ENCODE measurements at regions of chr5 and their contacts with region 1.

Region 1: GRCh38 chr5:157328277-157328912 is 62.5 kb downstream of the CYFIP2 start:
- DNase-seq: peak; percentile 88
- H3K4me3 ChIP-seq: peak overlapping the region; percentile 22 to 40; a peak in 2 of 4 replicates
- H3K27ac ChIP-seq: no peak overlapping the region
- H3K4me1 ChIP-seq: no peaks in the 10 kb centered on the region; a peak in 1 of 4 replicates
- H3K27me3 ChIP-seq: no peaks in the 10 kb centered on the region
- CTCF ChIP-seq: peak; percentile 91
- EP300 ChIP-seq: no peak
- RAD21 ChIP-seq: peak; percentile 96

Region 2: GRCh38 chr5:157253547-157253946 is 74.8 kb before region 1 on chr5:
- CTCF ChIA-PET with region 1: interaction called, 15 read pairs
- POLR2A ChIA-PET with region 1: no interaction called
- DNase-seq: peak; percentile 86
- H3K4me3 ChIP-seq: no peak overlapping the region; a peak in 1 of 4 replicates
- H3K27ac ChIP-seq: no peak overlapping the region
- H3K4me1 ChIP-seq: peaks cover 0 to 9% of the 10 kb centered on the region in 2 experiments; a peak in 2 of 4 replicates
- H3K27me3 ChIP-seq: no peaks in the 10 kb centered on the region
- CTCF ChIP-seq: peak; percentile 92
- EP300 ChIP-seq: no peak
- RAD21 ChIP-seq: peak; percentile 95

Region 3: DNA sequence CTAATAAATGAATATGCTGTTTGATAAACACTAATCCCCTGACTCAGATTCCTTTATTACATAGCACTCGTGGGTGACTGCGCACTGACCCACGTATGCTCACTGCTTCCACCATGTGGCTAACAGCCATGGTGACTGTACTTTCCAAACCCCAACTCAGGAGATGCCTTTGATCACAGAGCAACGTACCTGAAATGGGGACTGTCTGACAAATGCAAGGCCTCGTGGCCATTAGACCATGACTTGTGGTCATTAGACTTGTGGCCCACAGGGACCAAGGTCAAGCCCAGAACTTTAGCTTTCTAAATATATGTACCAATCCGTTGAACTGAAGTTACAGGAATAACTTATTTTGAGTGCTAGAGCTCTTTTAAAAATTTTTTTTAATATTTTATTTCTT is 15.9 kb before region 1 on chr5:
- CTCF ChIA-PET with region 1: interaction called, 27 read pairs
- POLR2A ChIA-PET with region 1: no interaction called
- DNase-seq: peak; percentile 82
- H3K4me3 ChIP-seq: no peak overlapping the region; a peak in 1 of 4 replicates
- H3K27ac ChIP-seq: no peak overlapping the region
- H3K4me1 ChIP-seq: peaks cover 0 to 3% of the 10 kb centered on the region in 2 experiments; a peak in 1 of 4 replicates
- H3K27me3 ChIP-seq: no peaks in the 10 kb centered on the region
- CTCF ChIP-seq: peak; percentile 80
- EP300 ChIP-seq: no peak
- RAD21 ChIP-seq: peak; percentile 76

Region 4: GRCh38 chr5:157354800-157355199 is 26.4 kb after region 1 on chr5:
- CTCF ChIA-PET with region 1: interaction called, 15 read pairs
- POLR2A ChIA-PET with region 1: no interaction called
- DNase-seq: peak; percentile 27
- H3K4me3 ChIP-seq: no peak overlapping the region; a peak in 1 of 4 replicates
- H3K27ac ChIP-seq: no peak overlapping the region
- H3K4me1 ChIP-seq: peaks cover 0 to 9% of the 10 kb centered on the region in 2 experiments; a peak in 2 of 4 replicates
- H3K27me3 ChIP-seq: no peaks in the 10 kb centered on the region
- CTCF ChIP-seq: peak; percentile 45
- EP300 ChIP-seq: no peak
- RAD21 ChIP-seq: no peak

Region 5: DNA sequence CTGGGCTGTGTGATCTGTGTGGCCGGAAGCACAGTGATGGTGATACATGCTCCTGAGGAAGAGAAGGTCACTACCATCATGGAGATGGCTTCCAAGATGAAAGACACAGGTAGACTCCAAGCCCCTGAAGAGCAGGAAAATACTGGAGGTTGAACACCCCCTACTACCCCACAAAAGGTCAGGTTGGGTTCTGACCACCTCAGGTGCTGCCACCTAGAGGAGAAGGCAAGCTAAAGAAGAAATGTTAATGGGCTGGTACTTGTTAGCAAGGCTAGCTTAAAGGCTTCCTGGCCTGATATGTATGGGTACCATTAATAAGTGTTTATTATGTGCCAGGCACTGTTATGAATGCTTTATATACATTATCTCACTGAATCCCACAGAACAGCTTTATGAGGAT is 143.3 kb after region 1 on chr5:
- CTCF ChIA-PET with region 1: interaction called, 102 read pairs
- POLR2A ChIA-PET with region 1: no interaction called
- DNase-seq: peak; percentile 51
- H3K4me3 ChIP-seq: no peak overlapping the region
- H3K27ac ChIP-seq: 0 out of 4 replicates have a peak overlapping the region, but pooled peaks of 1 of the 2 experiments have one; percentile 40
- H3K4me1 ChIP-seq: peaks cover 1 to 15% of the 10 kb centered on the region in 2 experiments; a peak in 3 of 4 replicates
- H3K27me3 ChIP-seq: no peaks in the 10 kb centered on the region
- CTCF ChIP-seq: peak; percentile 70
- EP300 ChIP-seq: no peak
- RAD21 ChIP-seq: peak; percentile 59

Region 6: GRCh38 chr5:157486221-157486681 is 157.9 kb after region 1 on chr5:
- CTCF ChIA-PET with region 1: interaction called, 102 read pairs
- POLR2A ChIA-PET with region 1: no interaction called
- DNase-seq: no peak
- H3K4me3 ChIP-seq: no peak overlapping the region
- H3K27ac ChIP-seq: no peak overlapping the region
- H3K4me1 ChIP-seq: no peaks in the 10 kb centered on the region
- H3K27me3 ChIP-seq: no peaks in the 10 kb centered on the region
- CTCF ChIP-seq: no peak
- EP300 ChIP-seq: no peak
- RAD21 ChIP-seq: no peak

Region 7: GRCh38 chr5:157640406-157641066 is 312.1 kb after region 1 on chr5:
- CTCF ChIA-PET with region 1: no interaction called
- POLR2A ChIA-PET with region 1: no interaction called
- DNase-seq: no peak
- H3K4me3 ChIP-seq: no peak overlapping the region
- H3K27ac ChIP-seq: no peak overlapping the region
- H3K4me1 ChIP-seq: no peaks in the 10 kb centered on the region
- H3K27me3 ChIP-seq: no peaks in the 10 kb centered on the region
- CTCF ChIP-seq: no peak
- EP300 ChIP-seq: no peak
- RAD21 ChIP-seq: no peak

Region 8: GRCh38 chr5:157743163-157744050 is 415.0 kb after region 1 on chr5 and contains the start of gene LSM11:
- CTCF ChIA-PET with region 1: interaction called, 10 read pairs
- POLR2A ChIA-PET with region 1: no interaction called
- DNase-seq: peak; percentile 98
- H3K4me3 ChIP-seq: peak within 1 kb of the TSS; percentile 76 to 83
- H3K27ac ChIP-seq: peak within 1 kb of the TSS in 1 of 2 experiments; percentile 56; a peak in 1 of 4 replicates
- H3K4me1 ChIP-seq: peaks cover 0 to 18% of the 10 kb centered on the region in 2 experiments; a peak in 2 of 4 replicates
- H3K27me3 ChIP-seq: no peaks in the 10 kb centered on the region
- CTCF ChIP-seq: peak; percentile 93
- EP300 ChIP-seq: no peak; a peak in 1 of 4 replicates
- RAD21 ChIP-seq: peak; percentile 79
- polyA plus RNA-seq, gene LSM11: 0.95 and 1.3 TPM in 2 replicates